Activated B cell treated with CpG ODN at 0.5 μM for 24 hours (primary cell): ENCODE measurements at regions of chr11 and their contacts with region 1.

Region 1: DNA sequence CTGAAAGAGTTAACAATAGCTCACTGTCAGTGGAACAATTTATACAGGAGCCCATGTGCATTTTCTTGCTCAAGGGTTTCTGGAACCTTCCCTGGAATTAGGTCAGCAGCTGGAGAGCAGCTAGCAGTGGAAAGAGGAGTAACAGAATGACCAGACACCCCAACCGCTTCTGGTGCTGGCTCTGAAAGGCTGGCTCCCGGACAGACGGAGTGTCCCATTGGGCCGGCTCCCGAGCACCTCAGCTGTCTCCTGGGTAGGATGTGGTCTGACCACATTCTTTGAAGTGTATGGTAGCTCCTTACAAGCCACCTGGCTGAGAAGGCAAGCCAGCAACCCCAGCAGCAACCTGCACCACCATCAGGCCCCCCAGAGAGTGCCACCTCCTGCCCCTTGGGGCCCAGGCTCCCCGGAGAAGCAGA is 44.7 kb downstream of the ABTB2 start:
- DNase-seq: peak; percentile 24
- ATAC-seq: peak; percentile 91
- H3K4me3 Mint-ChIP-seq: no peak overlapping the region
- H3K27ac Mint-ChIP-seq: no peak overlapping the region
- H3K4me1 Mint-ChIP-seq: peaks cover 17% of the 10 kb centered on the region
- H3K27me3 Mint-ChIP-seq: no peaks in the 10 kb centered on the region
- CTCF ChIP-seq: no peak

Region 2: DNA sequence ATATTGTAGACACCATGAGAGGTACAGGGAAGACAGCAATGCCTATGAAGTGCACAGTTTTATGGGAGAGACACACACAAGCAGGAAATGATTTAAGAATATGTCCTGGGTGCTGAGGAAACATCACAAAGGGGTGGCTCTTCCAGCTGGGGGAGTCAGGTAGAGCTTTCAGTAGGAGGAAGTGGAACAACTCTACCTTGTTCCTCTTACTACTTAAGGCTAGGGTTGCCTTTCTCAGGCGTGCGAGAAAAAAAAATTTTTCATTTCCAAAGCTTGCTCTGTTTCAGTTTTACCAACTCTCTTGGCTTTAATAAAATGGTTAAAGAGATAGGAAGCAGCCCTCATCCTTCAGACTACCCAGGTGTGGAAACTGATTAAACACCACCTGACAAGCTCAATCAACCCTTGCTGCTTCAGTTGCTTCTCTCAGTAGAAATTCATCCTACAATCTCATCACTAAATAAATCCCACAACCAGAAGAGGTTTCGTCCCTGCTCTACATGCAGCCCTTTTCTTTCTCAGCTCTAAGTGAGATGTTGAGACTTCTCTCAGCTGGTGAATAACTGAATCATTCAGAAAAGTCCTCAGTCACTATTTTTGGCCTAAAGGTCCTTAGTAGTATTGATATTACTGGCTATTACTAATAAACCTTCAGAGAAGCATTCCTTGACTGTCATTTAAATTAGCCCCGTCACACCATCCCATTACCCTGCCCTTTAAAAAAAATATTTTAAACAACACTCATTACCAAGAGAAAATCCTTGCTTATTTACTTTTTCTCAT is 38.8 kb after region 1 on chr11:
- CTCF ChIA-PET with region 1: interaction called, 4 read pairs
- POLR2A ChIA-PET with region 1: no interaction called
- intact Hi-C with region 1: loop called (anchors 5 kb)
- DNase-seq: no peak
- ATAC-seq: peak; percentile 44
- H3K4me3 Mint-ChIP-seq: peak overlapping the region; percentile 7
- H3K27ac Mint-ChIP-seq: peak overlapping the region; percentile 39
- H3K4me1 Mint-ChIP-seq: peaks cover 49% of the 10 kb centered on the region
- H3K27me3 Mint-ChIP-seq: peaks cover 6% of the 10 kb centered on the region
- CTCF ChIP-seq: no peak